Thyroid gland (tissue), 4 donors: ENCODE measurements at regions of chr2 and their contacts with region 1.

Region 1: DNA sequence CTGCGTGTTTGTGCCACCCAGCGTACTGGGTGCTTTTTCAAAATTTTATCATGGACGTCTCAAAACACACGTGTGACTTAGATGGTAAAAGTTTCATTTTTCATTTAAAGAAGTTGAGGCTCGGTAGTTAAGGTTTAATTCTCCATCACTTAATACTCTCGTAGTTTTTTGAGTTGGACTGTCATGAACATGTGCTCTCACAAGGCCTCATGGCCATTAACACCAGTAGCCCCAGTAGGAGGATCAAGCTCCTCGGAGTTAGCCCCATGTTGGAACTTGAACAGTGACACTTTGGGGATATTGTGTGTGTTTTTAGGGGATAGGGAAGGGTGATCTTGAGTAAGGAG is 15.3 kb downstream of the NMUR1 start:
- DNase-seq: no peak
- H3K4me3 ChIP-seq: peak overlapping the region in 2 of 3 donors; percentile 17 to 65
- H3K27ac ChIP-seq: peak overlapping the region; percentile 60 to 84 (median 80)
- H3K4me1 ChIP-seq: peaks cover 4 to 9% of the 10 kb centered on the region in 2 donors
- H3K27me3 ChIP-seq: no peaks in the 10 kb centered on the region
- CTCF ChIP-seq: no peak
- POLR2A ChIP-seq: no peak

Region 2: DNA sequence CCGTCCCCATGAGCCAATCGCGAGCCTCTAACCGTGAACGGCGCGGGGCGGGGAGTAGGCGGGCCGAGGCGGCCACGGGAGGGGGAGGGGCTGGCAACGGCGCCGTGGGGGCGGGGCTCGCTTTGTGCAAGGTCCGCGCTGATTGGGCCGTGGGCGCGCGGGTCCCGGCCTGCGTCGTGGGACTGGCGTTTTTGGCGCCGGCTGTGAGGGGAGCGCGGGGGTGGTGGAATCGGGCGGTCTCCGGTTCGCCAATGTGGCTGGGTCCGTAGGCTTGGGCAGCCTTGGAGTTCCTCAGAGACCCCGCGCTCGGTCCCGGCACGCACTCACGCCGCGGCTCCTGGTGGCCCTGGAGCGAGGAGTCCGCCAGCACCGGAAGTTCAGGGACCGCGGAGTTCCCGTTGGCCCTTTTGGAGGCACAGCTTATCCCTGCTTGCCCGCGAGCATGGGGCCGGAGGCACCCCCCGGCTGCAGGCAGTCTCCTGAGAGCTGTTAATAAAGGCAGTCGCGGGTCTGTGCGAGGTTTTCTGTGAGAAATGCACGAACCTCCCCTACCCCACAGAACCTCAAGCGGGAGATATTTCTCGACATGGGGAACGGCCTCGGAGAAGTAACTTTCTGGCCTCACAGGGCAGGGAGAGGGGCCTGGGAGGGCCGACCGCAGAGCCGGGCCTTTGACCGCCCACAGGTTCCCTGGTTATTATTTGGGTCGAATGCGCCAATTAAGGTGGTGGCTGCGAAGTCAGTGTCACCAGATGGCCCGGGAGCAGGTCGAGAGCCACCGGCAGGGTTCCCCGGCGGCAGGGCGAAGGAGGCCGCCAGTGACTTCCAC is 50.1 kb before region 1 on chr2:
- intact Hi-C with region 1: loop called (anchors 5 kb)
- DNase-seq: peak; percentile 98
- H3K4me3 ChIP-seq: peak overlapping the region; percentile 47 to 90 (median 83)
- H3K27ac ChIP-seq: peak overlapping the region; percentile 83 to 98 (median 96)
- H3K4me1 ChIP-seq: peaks cover 18 to 23% of the 10 kb centered on the region in 2 donors
- H3K27me3 ChIP-seq: no peaks in the 10 kb centered on the region
- CTCF ChIP-seq: no peak
- POLR2A ChIP-seq: no peak